RWPE1 (cell line): ENCODE measurements at regions of chr14 and their contacts with region 1.

Region 1: DNA sequence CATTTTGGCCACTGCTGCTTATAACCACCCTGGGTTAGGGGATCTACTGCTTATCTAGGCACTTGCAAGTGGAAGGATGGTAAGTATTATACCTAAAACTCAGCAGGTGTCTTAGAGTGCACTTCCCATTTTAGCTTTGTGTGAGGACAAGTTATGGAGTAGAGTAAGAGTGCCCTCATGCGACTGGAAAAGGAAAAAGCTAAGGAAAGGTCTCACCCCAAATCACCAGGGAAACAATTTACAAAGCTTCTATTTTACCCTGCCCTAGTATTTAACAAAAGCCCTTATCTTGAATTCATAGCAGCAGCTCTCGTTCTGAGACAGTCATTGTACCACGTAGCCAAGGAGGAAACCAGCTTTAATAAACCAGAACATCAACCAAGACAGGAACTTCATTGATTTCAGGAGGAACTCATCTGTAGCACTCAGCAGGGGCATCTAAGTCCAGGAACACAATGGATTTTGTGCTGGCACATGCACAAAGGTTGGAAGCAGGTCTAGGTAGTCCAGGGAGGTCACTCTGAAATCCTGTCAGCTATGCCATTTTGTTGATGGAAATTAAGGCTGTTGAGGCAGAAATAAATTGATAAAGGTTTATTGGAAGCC is 2.9 kb downstream of the RDH12 start:
- DNase-seq: peak; percentile 69
- H3K27ac ChIP-seq: no peak overlapping the region
- CTCF ChIP-seq: peak; percentile 84

Region 2: GRCh38 chr14:67426983-67427606 is 277.5 kb before region 1 on chr14:
- CTCF ChIA-PET with region 1: interaction called, 10 read pairs
- POLR2A ChIA-PET with region 1: no interaction called
- DNase-seq: peak; percentile 83
- H3K27ac ChIP-seq: 0 out of 2 replicates have a peak overlapping the region, but pooled peaks have one; percentile 16
- CTCF ChIP-seq: peak; percentile 79

Region 3: GRCh38 chr14:67583711-67584644 is 120.6 kb before region 1 on chr14:
- CTCF ChIA-PET with region 1: interaction called, 37 read pairs
- POLR2A ChIA-PET with region 1: interaction called, 4 read pairs
- DNase-seq: peak; percentile 77
- H3K27ac ChIP-seq: no peak overlapping the region
- CTCF ChIP-seq: peak; percentile 77

Region 4: GRCh38 chr14:67599698-67600561 is 104.7 kb before region 1 on chr14 and contains the start of gene PIGH:
- CTCF ChIA-PET with region 1: interaction called, 14 read pairs
- POLR2A ChIA-PET with region 1: no interaction called
- DNase-seq: peak; percentile 86
- H3K27ac ChIP-seq: peak within 1 kb of the TSS; percentile 79
- CTCF ChIP-seq: peak; percentile 65

Region 5: DNA sequence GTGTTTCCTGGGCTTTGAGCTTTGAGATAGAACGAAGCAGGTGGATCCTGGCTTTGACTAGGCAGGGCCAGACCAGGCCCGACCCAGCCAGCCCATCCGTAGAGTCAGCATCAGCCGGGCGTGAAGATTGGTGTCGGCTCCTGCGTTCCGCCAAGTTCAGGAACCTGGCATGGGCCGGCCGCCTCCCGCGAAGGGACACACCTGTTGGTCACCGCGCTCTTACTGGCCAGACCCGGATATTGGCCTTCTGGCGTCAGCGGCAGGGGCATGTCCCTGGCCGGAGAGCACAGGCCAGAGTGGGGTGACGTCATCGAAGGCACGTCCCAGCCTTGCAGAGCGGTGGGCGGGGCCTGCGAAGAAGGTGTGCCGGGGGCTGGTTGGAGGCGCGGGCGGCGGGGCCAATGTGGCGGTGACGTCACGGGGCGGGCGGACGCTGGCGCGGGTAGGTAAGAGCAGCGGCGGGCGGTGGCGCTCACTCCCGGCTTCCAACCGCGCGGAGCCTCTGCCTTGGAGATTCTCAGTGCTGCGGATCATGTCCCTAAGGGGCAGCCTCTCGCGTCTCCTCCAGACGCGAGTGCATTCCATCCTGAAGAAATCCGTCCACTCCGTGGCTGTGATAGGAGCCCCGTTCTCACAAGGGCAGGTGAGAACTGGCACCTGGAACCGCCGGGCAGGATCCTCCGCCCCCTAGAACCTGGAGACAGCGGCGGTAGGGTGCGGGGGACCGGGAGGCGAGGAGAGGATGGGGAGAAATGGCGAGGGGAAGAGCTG is 85.0 kb before region 1 on chr14 and contains the start of gene ARG2:
- CTCF ChIA-PET with region 1: interaction called, 44 read pairs
- POLR2A ChIA-PET with region 1: interaction called, 3 read pairs
- DNase-seq: peak; percentile 95
- H3K27ac ChIP-seq: peak within 1 kb of the TSS; percentile 61
- CTCF ChIP-seq: 0 out of 2 replicates have a peak, but pooled peaks have one; percentile 19

Region 6: GRCh38 chr14:67674481-67675169 is 30.0 kb before region 1 on chr14 and contains the start of gene VTI1B:
- CTCF ChIA-PET with region 1: interaction called, 13 read pairs
- POLR2A ChIA-PET with region 1: no interaction called
- DNase-seq: peak; percentile 69
- H3K27ac ChIP-seq: peak within 1 kb of the TSS; percentile 87
- CTCF ChIP-seq: no peak